Naive thymus-derived CD4-positive, alpha-beta T cell (primary cell): ENCODE measurements at regions of chrX and their contacts with region 1.

Region 1: GRCh38 chrX:64975989-64976672 is at the start of gene ZC4H2:
- DNase-seq: peak; percentile 17 to 73 (median 58)
- ATAC-seq: peak; percentile 96
- H3K4me3 ChIP-seq: peak within 1 kb of the TSS; percentile 62
- H3K4me3 Mint-ChIP-seq: peak within 1 kb of the TSS; percentile 87 to 99 (median 96)
- H3K27ac ChIP-seq: peak within 1 kb of the TSS; percentile 60
- H3K27ac Mint-ChIP-seq: peak within 1 kb of the TSS; percentile 58 to 92 (median 88)
- H3K4me1 ChIP-seq: peaks cover 3 to 11% of the 10 kb centered on the region in 2 donors
- H3K4me1 Mint-ChIP-seq: peaks cover 2 to 37% (median 28%) of the 10 kb centered on the region in 7 donors
- H3K27me3 ChIP-seq: no peaks in the 10 kb centered on the region
- H3K27me3 Mint-ChIP-seq: no peaks in the 10 kb centered on the region
- total RNA-seq, gene ZC4H2: 11.5 to 22.9 (median 12.9) TPM

Region 2: DNA sequence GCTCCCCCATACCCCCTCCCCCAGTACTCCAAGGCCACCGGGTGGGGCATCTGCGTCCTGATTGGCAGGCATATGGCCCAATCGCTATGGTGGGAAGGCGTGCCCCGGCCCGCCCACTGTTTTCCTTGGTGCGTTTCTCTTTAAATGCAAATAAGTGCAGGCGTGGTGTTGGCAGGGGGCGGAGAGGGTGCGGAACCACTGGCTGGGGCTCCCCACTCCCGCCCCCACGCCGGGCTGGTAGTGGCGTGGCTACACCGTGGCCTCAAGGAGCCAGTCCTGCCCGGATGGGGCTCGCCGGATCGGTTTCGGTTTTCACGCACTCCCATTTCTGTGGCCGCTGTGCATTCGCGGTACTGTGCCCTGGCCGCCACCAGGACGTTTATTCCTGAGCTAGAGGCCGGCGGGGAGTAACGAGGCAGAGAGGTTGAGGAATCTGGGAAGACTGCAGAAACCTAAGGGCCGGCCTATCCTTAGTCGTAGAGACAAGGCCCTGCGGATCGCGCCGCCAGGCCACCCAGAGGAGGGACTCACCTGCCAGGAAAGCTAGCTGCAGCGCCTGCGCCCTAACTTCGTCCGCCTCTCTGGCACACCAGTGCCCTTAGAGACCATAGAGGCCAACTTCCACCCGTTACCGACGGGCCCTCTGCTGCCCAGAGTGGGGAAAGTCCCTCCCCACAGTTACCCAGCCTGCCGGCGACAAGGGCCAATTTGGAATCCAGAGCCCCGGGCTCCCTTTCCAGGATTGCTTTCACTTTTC is 770.2 kb before region 1 on chrX:
- CTCF ChIA-PET with region 1: no interaction called
- POLR2A ChIA-PET with region 1: interaction called, 6 read pairs
- intact Hi-C with region 1: loop called (anchors 1 to 5 kb)
- DNase-seq: peak; percentile 70 to 88 (median 86)
- ATAC-seq: peak; percentile 95
- H3K4me3 ChIP-seq: peak overlapping the region; percentile 71
- H3K4me3 Mint-ChIP-seq: peak overlapping the region; percentile 83 to 94 (median 90)
- H3K27ac ChIP-seq: peak overlapping the region; percentile 77
- H3K27ac Mint-ChIP-seq: peak overlapping the region; percentile 82 to 95 (median 93)
- H3K4me1 ChIP-seq: peaks cover 6 to 7% of the 10 kb centered on the region in 2 donors
- H3K4me1 Mint-ChIP-seq: peaks cover 9 to 25% (median 13%) of the 10 kb centered on the region in 7 donors
- H3K27me3 ChIP-seq: no peaks in the 10 kb centered on the region
- H3K27me3 Mint-ChIP-seq: no peaks in the 10 kb centered on the region

Region 3: GRCh38 chrX:64758047-64758446 is 218.1 kb before region 1 on chrX:
- CTCF ChIA-PET with region 1: no interaction called
- POLR2A ChIA-PET with region 1: no interaction called
- intact Hi-C with region 1: loop called in 1 of 2 experiments (anchors 5 kb)
- DNase-seq: no peak
- ATAC-seq: no peak
- H3K4me3 ChIP-seq: no peak overlapping the region
- H3K4me3 Mint-ChIP-seq: no peak overlapping the region
- H3K27ac ChIP-seq: no peak overlapping the region
- H3K27ac Mint-ChIP-seq: no peak overlapping the region
- H3K4me1 ChIP-seq: peaks cover 3 to 5% of the 10 kb centered on the region in 2 donors
- H3K4me1 Mint-ChIP-seq: peaks cover 0 to 27% (median 14%) of the 10 kb centered on the region in 7 donors
- H3K27me3 ChIP-seq: no peaks in the 10 kb centered on the region
- H3K27me3 Mint-ChIP-seq: no peaks in the 10 kb centered on the region

Region 4: GRCh38 chrX:64805683-64806082 is 170.4 kb before region 1 on chrX:
- CTCF ChIA-PET with region 1: no interaction called
- POLR2A ChIA-PET with region 1: no interaction called
- intact Hi-C with region 1: no loop called
- DNase-seq: no peak
- ATAC-seq: no peak
- H3K4me3 ChIP-seq: no peak overlapping the region
- H3K4me3 Mint-ChIP-seq: no peak overlapping the region
- H3K27ac ChIP-seq: no peak overlapping the region
- H3K27ac Mint-ChIP-seq: no peak overlapping the region
- H3K4me1 ChIP-seq: no peaks in the 10 kb centered on the region
- H3K4me1 Mint-ChIP-seq: peaks cover 0 to 20% (median 4%) of the 10 kb centered on the region in 7 donors
- H3K27me3 ChIP-seq: no peaks in the 10 kb centered on the region
- H3K27me3 Mint-ChIP-seq: no peaks in the 10 kb centered on the region

Region 5: DNA sequence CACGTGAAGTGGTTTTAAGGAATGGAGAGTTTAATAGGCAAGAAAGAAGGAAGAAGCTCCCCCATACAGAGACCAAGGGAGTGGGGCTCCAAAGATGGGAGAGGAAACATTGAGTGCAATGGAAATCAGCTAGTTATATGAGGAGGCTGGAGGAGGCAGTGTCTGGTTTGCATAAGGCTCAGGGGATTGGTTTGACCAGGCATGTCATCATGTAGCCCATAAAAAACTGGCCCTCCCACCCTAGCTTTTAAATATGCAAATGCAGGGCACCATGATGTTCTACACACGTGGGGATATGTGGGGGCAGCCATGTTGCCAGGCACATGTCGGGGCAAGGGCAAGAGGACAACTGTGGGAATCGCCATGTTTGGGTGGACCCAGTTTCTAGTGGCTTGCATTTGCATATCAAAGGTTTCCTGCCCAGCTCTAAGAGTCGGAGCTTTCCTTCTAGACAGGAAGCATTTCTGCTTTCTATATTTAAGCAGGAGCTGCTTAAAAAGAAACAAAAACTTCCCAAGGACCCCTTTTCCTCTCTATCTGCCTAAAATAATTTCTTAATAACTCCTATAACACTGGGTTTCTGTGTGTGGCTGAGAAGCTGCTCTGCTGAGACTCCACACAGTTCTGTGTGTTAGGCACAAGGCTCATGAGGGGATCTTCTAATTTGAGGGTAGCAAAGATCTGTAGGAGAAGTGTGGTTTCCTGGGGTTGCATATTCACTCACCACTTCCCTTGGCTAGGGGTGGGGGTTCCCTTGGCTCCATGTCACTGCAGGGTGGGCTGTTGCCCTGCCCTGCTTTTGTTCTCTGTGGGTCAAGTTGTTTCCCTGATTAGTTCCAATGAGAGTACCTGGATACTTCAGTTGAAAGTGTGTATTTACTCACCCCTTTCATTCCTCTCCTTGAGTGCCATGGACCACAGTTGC is 950.2 kb after region 1 on chrX:
- CTCF ChIA-PET with region 1: no interaction called
- POLR2A ChIA-PET with region 1: no interaction called
- intact Hi-C with region 1: loop called in 1 of 2 experiments (anchors 5 kb)
- DNase-seq: peak in 7 of 9 donors; percentile 13 to 75 (median 54)
- ATAC-seq: peak; percentile 75
- H3K4me3 ChIP-seq: peak overlapping the region; percentile 31
- H3K4me3 Mint-ChIP-seq: peak overlapping the region; percentile 37 to 84 (median 70)
- H3K27ac ChIP-seq: peak overlapping the region; percentile 37
- H3K27ac Mint-ChIP-seq: peak overlapping the region; percentile 15 to 93 (median 73)
- H3K4me1 ChIP-seq: peaks cover 22 to 32% of the 10 kb centered on the region in 2 donors
- H3K4me1 Mint-ChIP-seq: peaks cover 33 to 71% (median 61%) of the 10 kb centered on the region in 7 donors
- H3K27me3 ChIP-seq: no peaks in the 10 kb centered on the region
- H3K27me3 Mint-ChIP-seq: no peaks in the 10 kb centered on the region